ENCODE measurements at regions of chr11 and their contacts with region 1.

Region 1: GRCh38 chr11:11848891-11849746 is 7.3 kb downstream of the USP47 start:
- DNase-seq: peak; percentile 77
- ATAC-seq: peak; percentile 81
- H3K4me3 Mint-ChIP-seq: no peak overlapping the region
- H3K27ac Mint-ChIP-seq: no peak overlapping the region
- H3K4me1 Mint-ChIP-seq: peaks cover 44% of the 10 kb centered on the region
- H3K27me3 Mint-ChIP-seq: no peaks in the 10 kb centered on the region

Region 2: DNA sequence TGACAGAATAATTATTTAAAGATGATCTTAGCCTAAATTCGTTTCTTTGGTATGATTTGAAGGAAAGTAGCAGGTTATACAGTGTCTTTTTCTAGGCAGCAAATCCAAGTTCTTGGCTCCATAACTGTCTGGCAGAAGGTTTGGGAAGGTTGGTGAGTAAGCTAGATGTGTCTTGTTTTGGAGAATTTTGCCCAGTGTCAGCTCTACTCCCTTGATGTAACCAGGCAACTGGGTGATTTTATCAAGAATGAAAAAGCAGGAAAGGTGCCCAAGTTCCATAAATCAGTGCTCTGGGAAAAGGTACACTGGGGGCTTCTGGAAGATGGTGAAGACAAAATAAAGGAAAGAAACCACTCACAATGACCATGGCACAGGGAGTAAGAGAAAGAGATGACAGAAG is 78.8 kb before region 1 on chr11:
- CTCF ChIA-PET with region 1: no interaction called
- POLR2A ChIA-PET with region 1: no interaction called
- DNase-seq: no peak
- ATAC-seq: no peak
- H3K4me3 Mint-ChIP-seq: no peak overlapping the region
- H3K27ac Mint-ChIP-seq: no peak overlapping the region
- H3K4me1 Mint-ChIP-seq: no peaks in the 10 kb centered on the region
- H3K27me3 Mint-ChIP-seq: peaks cover 37% of the 10 kb centered on the region

Region 3: DNA sequence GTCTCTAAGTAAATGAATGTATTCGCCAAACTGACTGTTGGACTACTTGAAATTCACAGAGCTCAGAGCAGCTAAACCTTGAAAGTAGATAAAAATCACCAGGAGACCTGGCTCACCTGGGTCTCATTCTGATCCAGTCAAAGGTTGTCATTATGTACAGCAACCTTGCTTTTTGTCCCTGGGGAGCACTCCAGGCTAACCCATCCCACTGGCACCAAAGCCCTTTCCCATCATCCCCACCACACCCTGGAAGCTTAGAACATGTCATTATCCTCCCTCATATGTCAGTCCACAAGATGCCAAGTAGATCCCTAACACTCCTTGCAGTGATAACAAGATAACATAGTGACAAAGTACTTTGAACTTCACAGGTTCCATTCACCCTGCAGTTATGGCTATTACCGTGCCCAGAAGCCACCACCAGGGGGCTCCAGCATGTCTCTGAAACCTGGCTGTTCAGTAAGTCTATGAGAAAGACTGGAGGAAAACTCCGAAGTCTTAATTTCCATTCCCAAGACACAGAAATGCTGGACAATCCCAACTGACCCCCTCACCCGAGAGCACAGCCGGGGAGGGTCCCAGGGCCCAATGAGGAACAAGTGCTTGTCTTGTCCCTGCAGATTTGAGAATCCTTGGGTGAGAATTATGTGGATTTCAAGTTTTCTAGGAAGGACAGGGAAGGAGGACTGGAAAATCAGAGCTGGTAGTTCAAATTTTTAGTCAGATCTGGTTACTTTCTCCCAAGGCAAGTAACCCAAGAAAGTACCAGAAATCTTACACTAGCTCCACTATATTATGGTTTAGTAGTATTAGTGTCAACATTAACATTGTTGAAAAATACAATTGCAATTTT is 50.3 kb before region 1 on chr11:
- CTCF ChIA-PET with region 1: interaction called, 17 read pairs
- POLR2A ChIA-PET with region 1: no interaction called
- DNase-seq: peak; percentile 83
- ATAC-seq: peak; percentile 82
- H3K4me3 Mint-ChIP-seq: no peak overlapping the region
- H3K27ac Mint-ChIP-seq: no peak overlapping the region
- H3K4me1 Mint-ChIP-seq: no peaks in the 10 kb centered on the region
- H3K27me3 Mint-ChIP-seq: peaks cover 31% of the 10 kb centered on the region

Region 4: GRCh38 chr11:11806586-11806985 is 42.5 kb before region 1 on chr11:
- CTCF ChIA-PET with region 1: interaction called, 14 read pairs
- POLR2A ChIA-PET with region 1: no interaction called
- DNase-seq: no peak
- ATAC-seq: no peak
- H3K4me3 Mint-ChIP-seq: no peak overlapping the region
- H3K27ac Mint-ChIP-seq: no peak overlapping the region
- H3K4me1 Mint-ChIP-seq: no peaks in the 10 kb centered on the region
- H3K27me3 Mint-ChIP-seq: peaks cover 17% of the 10 kb centered on the region

Region 5: GRCh38 chr11:11816511-11817319 is 32.4 kb before region 1 on chr11:
- CTCF ChIA-PET with region 1: no interaction called
- POLR2A ChIA-PET with region 1: no interaction called
- DNase-seq: no peak
- ATAC-seq: no peak
- H3K4me3 Mint-ChIP-seq: no peak overlapping the region
- H3K27ac Mint-ChIP-seq: no peak overlapping the region
- H3K4me1 Mint-ChIP-seq: no peaks in the 10 kb centered on the region
- H3K27me3 Mint-ChIP-seq: peaks cover 5% of the 10 kb centered on the region

Region 6: DNA sequence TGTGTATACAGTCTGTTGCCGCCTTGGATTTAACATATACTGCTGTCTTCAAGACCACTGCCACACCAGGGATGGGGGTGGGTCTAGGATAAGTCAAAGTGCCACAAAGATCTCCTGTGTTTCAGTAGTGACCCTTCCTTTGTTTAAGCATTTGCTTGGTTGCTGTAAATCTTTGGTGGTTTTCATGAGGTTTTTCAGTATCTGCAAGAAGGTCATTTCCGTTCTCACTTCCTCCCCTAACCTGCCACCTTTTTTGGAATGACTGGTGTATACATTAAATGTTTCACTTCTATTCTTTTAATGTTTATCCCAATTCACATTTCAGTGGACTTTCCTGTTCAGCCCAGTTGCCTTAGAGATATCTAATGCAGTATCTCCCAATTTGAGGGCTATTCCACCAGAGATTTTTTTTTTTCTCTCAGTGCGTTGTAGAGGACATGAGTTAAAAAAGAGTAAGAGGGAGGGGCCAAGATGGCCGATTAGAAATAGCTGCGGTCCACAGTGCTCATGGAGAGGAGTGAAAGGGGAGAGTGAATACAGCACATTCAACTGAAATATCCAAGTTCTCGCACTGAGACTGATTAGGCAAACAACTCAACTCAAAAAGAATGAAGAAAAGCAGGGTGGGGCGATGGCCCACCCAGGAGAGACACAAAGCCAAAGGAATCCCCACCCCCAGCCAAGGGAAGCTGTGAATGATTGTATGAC is 35.8 kb after region 1 on chr11:
- CTCF ChIA-PET with region 1: interaction called, 10 read pairs
- POLR2A ChIA-PET with region 1: no interaction called
- DNase-seq: no peak
- ATAC-seq: no peak
- H3K4me3 Mint-ChIP-seq: no peak overlapping the region
- H3K27ac Mint-ChIP-seq: peak overlapping the region; percentile 58
- H3K4me1 Mint-ChIP-seq: peaks cover 29% of the 10 kb centered on the region
- H3K27me3 Mint-ChIP-seq: no peaks in the 10 kb centered on the region

Measured in activated CD8-positive, alpha-beta T cell treated with anti-CD3 and anti-CD28 coated beads, Interleukin-2, amount 10 ng/mL, durations not matched to agents 7 days and 5 days (primary cell).